Activated naive CD4-positive, alpha-beta T cell treated with anti-CD3 and anti-CD28 coated beads for 36 hours (primary cell): ENCODE measurements at regions of chr6 and their contacts with region 1.

Region 1: DNA sequence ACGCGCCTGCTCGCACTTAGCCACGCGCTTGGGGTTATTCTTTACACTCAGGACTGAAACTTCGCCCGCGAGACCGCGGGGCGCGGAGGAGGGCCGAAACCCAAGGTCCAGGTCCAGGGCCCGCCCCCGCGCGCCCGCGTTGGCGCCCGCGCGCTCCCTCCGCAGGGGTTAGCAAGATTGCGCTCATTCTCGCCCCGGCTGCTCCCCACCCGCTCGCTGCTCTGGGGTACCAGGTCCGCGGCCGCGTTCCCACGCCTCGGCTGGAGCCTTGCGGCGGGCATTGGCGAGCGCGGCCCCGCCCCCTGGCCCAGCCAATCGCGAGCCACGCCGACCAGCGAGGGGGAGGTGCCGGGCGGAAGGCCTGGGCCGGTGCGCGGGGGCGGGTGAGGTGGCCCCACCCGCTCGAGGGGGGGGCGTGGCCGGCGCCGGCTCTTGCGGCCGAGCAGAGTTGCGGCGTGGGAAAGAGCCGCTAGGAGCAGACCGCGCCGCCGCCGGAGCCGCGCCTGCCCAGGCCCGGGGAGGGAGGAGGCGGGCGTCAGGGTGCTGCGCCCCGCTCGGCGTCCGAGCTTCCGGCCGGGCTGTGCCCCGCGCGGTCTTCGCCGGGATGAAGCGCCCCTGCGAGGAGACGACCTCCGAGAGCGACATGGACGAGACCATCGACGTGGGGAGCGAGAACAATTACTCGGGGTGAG is at the start of gene HEY2:
- DNase-seq: peak; percentile 83
- H3K4me3 Mint-ChIP-seq: peak within 1 kb of the TSS; percentile 79
- H3K27ac Mint-ChIP-seq: no peak within 1 kb of the TSS
- H3K4me1 Mint-ChIP-seq: peaks cover 33% of the 10 kb centered on the region
- H3K27me3 Mint-ChIP-seq: peaks cover 51% of the 10 kb centered on the region
- total RNA-seq, gene HEY2: not detected

Region 2: GRCh38 chr6:124870611-124871459 is 878.5 kb before region 1 on chr6:
- CTCF ChIA-PET with region 1: no interaction called
- intact Hi-C with region 1: loop called (anchors 5 kb)
- DNase-seq: no peak
- H3K4me3 Mint-ChIP-seq: no peak overlapping the region
- H3K27ac Mint-ChIP-seq: no peak overlapping the region
- H3K4me1 Mint-ChIP-seq: no peaks in the 10 kb centered on the region
- H3K27me3 Mint-ChIP-seq: no peaks in the 10 kb centered on the region

Region 3: GRCh38 chr6:125153391-125154117 is 595.8 kb before region 1 on chr6 and contains the start of gene TPD52L1:
- CTCF ChIA-PET with region 1: no interaction called
- intact Hi-C with region 1: loop called (anchors 2 kb)
- DNase-seq: peak; percentile 73
- H3K4me3 Mint-ChIP-seq: peak within 1 kb of the TSS; percentile 74
- H3K27ac Mint-ChIP-seq: no peak within 1 kb of the TSS
- H3K4me1 Mint-ChIP-seq: peaks cover 6% of the 10 kb centered on the region
- H3K27me3 Mint-ChIP-seq: peaks cover 28% of the 10 kb centered on the region
- total RNA-seq, gene TPD52L1: 5.6 to 5.7 TPM

Region 4: DNA sequence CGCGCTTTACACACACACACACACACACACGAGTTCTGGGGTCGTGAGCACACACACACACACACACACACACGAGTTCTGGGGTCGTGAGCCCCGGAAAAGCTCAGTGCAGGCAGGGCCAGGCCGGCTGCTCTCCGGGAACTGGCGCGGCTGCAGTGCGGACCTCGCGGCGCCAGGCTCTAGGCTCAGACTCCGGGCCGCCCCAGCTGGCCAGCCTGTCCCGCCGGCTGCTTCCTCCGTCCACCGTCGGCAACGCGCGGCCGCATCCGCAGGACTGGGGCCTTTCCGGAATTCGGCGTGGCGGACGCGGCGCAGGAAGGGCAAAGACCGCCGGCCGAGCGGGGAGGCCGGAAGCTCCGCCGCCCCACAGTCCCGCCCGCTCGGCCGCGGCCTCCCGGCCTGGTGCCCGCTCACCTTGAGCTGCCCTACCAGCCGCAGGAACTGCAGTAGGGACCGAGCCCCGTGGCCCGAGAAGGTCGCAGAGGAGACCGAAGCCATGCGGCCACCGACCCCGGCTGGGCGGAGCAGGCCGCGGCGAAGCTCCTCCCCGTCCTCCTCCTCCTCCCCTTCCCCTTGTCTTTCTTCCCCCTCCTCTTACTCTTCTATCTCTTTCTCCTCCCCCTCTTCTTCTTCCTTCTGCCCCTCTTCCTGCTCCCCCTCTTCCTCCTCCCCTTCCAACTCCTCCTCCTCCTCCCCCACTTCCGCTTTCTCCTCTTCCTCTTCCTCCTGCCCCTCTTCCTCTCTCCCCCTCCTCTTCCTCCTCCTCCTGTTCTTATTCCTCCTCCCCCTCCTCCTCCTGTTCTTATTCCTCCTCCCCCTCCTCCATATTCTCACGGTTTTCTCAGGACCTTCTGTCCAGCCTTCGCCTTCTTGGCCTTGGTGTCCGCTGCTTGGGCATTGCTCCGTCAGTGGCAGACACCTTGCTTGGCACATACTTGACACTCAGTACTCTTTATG is 447.6 kb before region 1 on chr6 and contains the start of gene HDDC2:
- CTCF ChIA-PET with region 1: interaction called, 5 read pairs
- intact Hi-C with region 1: loop called (anchors 1 kb)
- DNase-seq: peak; percentile 38
- H3K4me3 Mint-ChIP-seq: peak within 1 kb of the TSS; percentile 88
- H3K27ac Mint-ChIP-seq: peak within 1 kb of the TSS; percentile 93
- H3K4me1 Mint-ChIP-seq: peaks cover 48% of the 10 kb centered on the region
- H3K27me3 Mint-ChIP-seq: no peaks in the 10 kb centered on the region
- total RNA-seq, gene HDDC2: 117 to 127 TPM

Region 5: DNA sequence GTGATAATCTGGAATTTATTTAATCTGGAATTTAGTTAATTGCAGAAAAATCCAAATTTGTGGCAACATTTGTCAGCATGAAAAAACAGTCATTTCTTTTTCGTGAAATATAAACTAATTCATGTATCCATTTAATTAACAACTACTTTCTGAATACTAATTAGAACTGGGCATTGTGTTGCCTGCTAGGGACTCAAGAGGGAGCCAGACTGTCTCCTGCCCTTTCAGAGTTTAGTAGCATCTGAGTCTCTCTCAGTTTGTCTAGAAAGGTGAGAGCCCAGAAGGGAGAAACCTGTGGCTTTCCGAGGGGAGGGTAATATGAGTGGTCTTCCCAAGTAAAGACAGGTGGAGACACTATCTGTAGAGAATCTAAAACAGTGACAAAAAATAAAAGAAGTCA is 236.7 kb before region 1 on chr6:
- CTCF ChIA-PET with region 1: interaction called, 3 read pairs
- intact Hi-C with region 1: loop called (anchors 5 kb)
- DNase-seq: no peak
- H3K4me3 Mint-ChIP-seq: no peak overlapping the region
- H3K27ac Mint-ChIP-seq: no peak overlapping the region
- H3K4me1 Mint-ChIP-seq: no peaks in the 10 kb centered on the region
- H3K27me3 Mint-ChIP-seq: peaks cover 2% of the 10 kb centered on the region

Region 6: DNA sequence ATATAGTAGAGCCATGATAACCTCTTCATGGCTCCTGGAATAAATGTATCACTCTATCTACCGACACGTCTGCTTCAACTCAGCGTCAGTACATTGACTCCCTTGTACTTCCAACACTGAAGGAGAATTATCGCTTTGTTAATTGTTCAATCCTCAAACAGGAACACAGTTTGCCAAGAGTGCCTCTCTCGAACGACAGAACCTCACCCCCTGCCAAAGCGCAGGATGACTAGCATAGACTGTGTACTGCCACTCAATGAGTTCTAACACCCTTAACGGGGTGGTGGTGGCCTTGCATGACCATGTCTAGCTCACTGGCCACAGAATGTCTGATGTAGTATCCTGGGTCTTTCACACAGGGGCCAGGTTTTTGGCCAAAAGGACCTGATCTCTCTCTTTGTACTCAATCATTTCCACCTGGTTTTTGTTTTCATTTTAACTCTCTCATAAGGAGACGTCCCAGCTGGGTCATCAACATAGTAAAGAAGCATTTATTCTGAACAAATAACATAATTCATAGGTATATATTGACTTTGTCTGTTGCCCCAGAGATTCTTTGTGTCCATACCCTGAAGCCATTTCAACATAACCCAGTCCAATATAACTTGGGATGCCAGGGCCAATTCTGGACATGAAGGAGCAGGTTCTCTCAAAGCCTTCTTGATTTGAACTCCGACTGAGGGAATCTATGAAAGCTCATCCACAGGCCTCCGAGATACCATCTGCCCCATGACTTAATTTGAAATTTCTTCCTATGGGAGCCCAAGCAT is 81.1 kb before region 1 on chr6:
- CTCF ChIA-PET with region 1: no interaction called
- intact Hi-C with region 1: no loop called
- DNase-seq: no peak
- H3K4me3 Mint-ChIP-seq: no peak overlapping the region
- H3K27ac Mint-ChIP-seq: no peak overlapping the region
- H3K4me1 Mint-ChIP-seq: no peaks in the 10 kb centered on the region
- H3K27me3 Mint-ChIP-seq: peaks cover 8% of the 10 kb centered on the region

Region 7: GRCh38 chr6:126339796-126340609 is 590.7 kb after region 1 on chr6 and contains the start of gene CENPW:
- CTCF ChIA-PET with region 1: no interaction called
- intact Hi-C with region 1: loop called (anchors 10 kb)
- DNase-seq: peak; percentile 98
- H3K4me3 Mint-ChIP-seq: no peak within 1 kb of the TSS
- H3K27ac Mint-ChIP-seq: no peak within 1 kb of the TSS
- H3K4me1 Mint-ChIP-seq: peaks cover 14% of the 10 kb centered on the region
- H3K27me3 Mint-ChIP-seq: no peaks in the 10 kb centered on the region
- total RNA-seq, gene CENPW: 77.8 to 85.8 TPM